ENCODE measurements at regions of chr4 and their contacts with region 1.

Region 1: GRCh38 chr4:77044461-77045150 is 31.2 kb downstream of the CCNI start:
- DNase-seq: no peak
- H3K4me3 Mint-ChIP-seq: no peak overlapping the region
- H3K27ac Mint-ChIP-seq: no peak overlapping the region
- H3K4me1 Mint-ChIP-seq: peaks cover 1% of the 10 kb centered on the region
- H3K27me3 Mint-ChIP-seq: no peaks in the 10 kb centered on the region

Region 2: GRCh38 chr4:77031544-77031943 is 13.1 kb before region 1 on chr4:
- CTCF ChIA-PET with region 1: interaction called, 54 read pairs
- POLR2A ChIA-PET with region 1: interaction called, 6 read pairs
- DNase-seq: peak; percentile 26
- H3K4me3 Mint-ChIP-seq: no peak overlapping the region
- H3K27ac Mint-ChIP-seq: peak overlapping the region; percentile 5
- H3K4me1 Mint-ChIP-seq: peaks cover 46% of the 10 kb centered on the region
- H3K27me3 Mint-ChIP-seq: peaks cover 3% of the 10 kb centered on the region

Region 3: GRCh38 chr4:77065382-77065781 is 20.8 kb after region 1 on chr4:
- CTCF ChIA-PET with region 1: interaction called, 11 read pairs
- POLR2A ChIA-PET with region 1: no interaction called
- DNase-seq: no peak
- H3K4me3 Mint-ChIP-seq: no peak overlapping the region
- H3K27ac Mint-ChIP-seq: no peak overlapping the region
- H3K4me1 Mint-ChIP-seq: peaks cover 22% of the 10 kb centered on the region
- H3K27me3 Mint-ChIP-seq: no peaks in the 10 kb centered on the region

Region 4: GRCh38 chr4:77193511-77194102 is 149.0 kb after region 1 on chr4:
- CTCF ChIA-PET with region 1: interaction called, 10 read pairs
- POLR2A ChIA-PET with region 1: no interaction called
- DNase-seq: peak; percentile 73
- H3K4me3 Mint-ChIP-seq: peak overlapping the region; percentile 77
- H3K27ac Mint-ChIP-seq: peak overlapping the region; percentile 78
- H3K4me1 Mint-ChIP-seq: peaks cover 19% of the 10 kb centered on the region
- H3K27me3 Mint-ChIP-seq: peaks cover 5% of the 10 kb centered on the region